ENCODE measurements at regions of chr7 and their contacts with region 1.

Region 1: DNA sequence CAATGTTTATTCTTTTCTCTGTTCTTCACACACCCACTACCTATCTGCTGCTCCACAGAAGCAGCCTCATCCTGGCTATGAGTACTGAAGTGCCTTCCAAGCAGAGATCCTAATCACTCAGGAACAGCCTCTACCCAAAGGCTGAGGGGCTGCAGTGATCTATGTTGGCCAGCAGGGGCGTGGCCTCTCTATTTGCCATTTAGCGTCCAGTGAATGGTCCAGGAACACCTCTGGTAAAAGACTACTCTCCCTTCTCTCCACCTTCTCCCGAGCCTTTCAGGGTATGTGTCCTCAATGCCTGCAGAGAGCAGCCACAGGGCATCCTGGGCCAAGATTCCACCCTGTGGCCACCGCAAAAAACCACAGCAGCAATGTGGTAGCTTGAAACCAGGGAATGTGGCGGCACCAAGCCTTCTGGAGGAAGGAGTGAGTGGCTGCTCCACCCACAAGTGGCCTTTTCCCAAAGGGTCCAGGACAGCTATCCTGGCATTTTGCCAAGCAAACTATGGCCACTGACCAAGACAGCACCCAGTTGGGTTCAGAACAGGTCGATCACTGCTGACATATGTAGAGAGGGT is 70.9 kb downstream of the SYPL1 start:
- DNase-seq: peak in 1 of 2 experiments; percentile 80
- H3K4me3 ChIP-seq: no peak overlapping the region
- H3K27ac ChIP-seq: no peak overlapping the region
- H3K4me1 ChIP-seq: peaks cover 0 to 7% (median 0%) of the 10 kb centered on the region in 4 experiments; a peak in 3 of 7 replicates
- H3K27me3 ChIP-seq: no peaks in the 10 kb centered on the region
- CTCF ChIP-seq: peak; percentile 76 to 98 (median 89)
- EP300 ChIP-seq: no peak
- POLR2A ChIP-seq: no peak
- RAD21 ChIP-seq: peak; percentile 55 to 65

Region 2: DNA sequence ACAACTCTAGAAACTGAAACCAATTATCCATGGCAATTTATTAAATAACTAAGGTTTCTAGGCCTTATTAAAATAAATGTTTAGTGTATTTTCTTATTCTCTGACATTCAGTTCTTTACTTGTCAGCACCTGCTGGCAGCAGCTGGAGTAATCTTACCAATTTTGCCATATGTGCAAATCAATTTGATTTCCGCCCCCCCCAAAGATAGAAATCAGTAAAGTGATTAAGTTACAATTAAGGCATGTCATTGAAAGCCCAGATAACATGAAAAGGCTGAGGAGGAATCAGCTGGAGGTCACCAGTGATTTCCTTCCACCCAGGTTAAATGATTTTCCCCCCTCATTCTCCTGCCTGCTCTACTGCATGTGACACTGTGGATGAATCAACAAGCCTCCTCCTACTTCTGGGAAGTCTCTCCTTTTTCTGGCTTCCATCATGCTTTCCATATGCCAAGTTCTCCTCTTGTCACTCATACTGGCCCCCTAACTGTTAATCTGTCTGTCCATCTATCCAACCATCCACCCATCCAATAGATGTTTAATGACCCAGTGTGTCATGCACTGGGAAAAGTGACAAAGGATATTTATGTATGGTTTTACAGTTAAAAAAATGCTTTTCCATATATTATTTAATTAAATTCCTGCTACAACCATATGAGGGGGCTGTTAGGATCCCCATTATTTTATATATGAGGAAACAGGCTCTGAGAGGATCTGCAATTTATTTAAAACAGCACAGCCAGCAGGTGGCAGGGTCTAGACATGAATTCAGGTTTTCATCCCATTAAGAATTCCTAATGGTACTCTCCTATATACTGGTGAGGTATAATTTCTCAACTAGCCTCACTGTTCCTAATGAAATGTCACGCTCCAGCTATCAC is 281.3 kb before region 1 on chr7:
- CTCF ChIA-PET with region 1: interaction called, 85 read pairs
- POLR2A ChIA-PET with region 1: no interaction called
- DNase-seq: no peak
- H3K4me3 ChIP-seq: no peak overlapping the region
- H3K27ac ChIP-seq: no peak overlapping the region
- H3K4me1 ChIP-seq: peaks cover 1 to 13% (median 4%) of the 10 kb centered on the region in 4 experiments; a peak in 4 of 7 replicates
- H3K27me3 ChIP-seq: no peaks in the 10 kb centered on the region
- CTCF ChIP-seq: peak in 2 of 3 experiments; percentile 45 to 47; a peak in 2 of 4 replicates
- EP300 ChIP-seq: no peak
- POLR2A ChIP-seq: no peak
- RAD21 ChIP-seq: peak; percentile 65 to 69

Region 3: DNA sequence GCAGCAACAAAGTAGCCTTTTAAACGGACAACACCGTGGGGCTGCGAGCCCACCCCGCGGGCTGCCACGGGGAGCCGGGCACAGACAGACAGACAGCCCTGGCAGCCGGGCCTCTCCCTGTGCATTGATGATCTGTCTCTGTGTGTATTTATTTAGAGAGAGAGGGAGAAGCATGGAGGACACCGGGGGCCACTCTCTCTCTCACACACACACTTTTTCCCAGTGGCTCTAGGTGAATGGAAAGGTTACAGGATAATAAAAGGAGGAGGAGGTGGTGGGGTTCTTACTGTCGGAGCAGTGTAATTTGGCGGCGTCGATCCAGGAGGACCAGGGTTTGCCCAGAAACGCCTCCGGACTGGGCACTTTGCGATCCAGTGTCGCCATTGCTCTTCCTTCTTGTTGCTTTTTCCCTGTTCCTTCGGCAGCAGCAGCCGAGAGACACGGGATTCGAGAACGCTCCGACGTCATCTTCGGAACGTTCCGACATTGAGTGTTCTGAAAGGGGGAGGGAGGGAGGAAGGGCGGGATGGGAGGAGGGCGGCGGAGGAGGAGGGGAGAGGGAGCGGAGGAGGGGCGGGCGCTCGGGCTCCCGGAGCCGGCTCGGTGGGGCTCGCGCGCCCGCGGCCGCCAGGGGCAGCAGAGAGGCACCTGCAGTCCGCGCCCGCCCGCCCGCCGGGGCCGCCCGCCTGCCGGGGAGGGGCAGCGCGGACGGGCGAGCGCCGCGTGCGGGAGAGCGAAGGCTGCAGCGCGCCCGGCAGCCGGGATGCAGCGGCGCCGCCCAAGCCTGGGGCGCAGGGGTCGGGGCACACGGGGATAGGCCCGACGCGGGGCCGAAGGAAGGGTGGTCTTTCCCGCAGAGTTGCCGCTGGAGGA is 164.9 kb before region 1 on chr7 and contains the start of gene ATXN7L1:
- CTCF ChIA-PET with region 1: interaction called, 32 read pairs
- POLR2A ChIA-PET with region 1: interaction called, 3 read pairs
- DNase-seq: peak; percentile 90 to 96
- H3K4me3 ChIP-seq: peak within 1 kb of the TSS; percentile 87 to 93 (median 90)
- H3K27ac ChIP-seq: peak within 1 kb of the TSS; percentile 91
- H3K4me1 ChIP-seq: peaks cover 6 to 27% (median 15%) of the 10 kb centered on the region in 4 experiments; a peak in 5 of 7 replicates
- H3K27me3 ChIP-seq: peaks cover 0 to 14% (median 12%) of the 10 kb centered on the region in 4 experiments; a peak in 5 of 7 replicates
- CTCF ChIP-seq: peak; percentile 50 to 57 (median 55); a peak in 3 of 4 replicates
- EP300 ChIP-seq: no peak
- POLR2A ChIP-seq: peak; percentile 79 to 89
- RAD21 ChIP-seq: peak; percentile 1 to 46; a peak in 2 of 4 replicates
- total RNA-seq, gene ATXN7L1: 34.0 and 34.5 TPM in 2 replicates

Region 4: GRCh38 chr7:105934572-105935185 is 106.5 kb before region 1 on chr7:
- CTCF ChIA-PET with region 1: interaction called, 119 read pairs
- POLR2A ChIA-PET with region 1: no interaction called
- DNase-seq: peak in 1 of 2 experiments; percentile 38
- H3K4me3 ChIP-seq: no peak overlapping the region
- H3K27ac ChIP-seq: no peak overlapping the region
- H3K4me1 ChIP-seq: peaks cover 0 to 4% (median under 1%) of the 10 kb centered on the region in 4 experiments; a peak in 2 of 7 replicates
- H3K27me3 ChIP-seq: no peaks in the 10 kb centered on the region
- CTCF ChIP-seq: peak; percentile 48 to 80 (median 78)
- EP300 ChIP-seq: no peak
- POLR2A ChIP-seq: no peak
- RAD21 ChIP-seq: peak; percentile 91 to 94

Region 5: DNA sequence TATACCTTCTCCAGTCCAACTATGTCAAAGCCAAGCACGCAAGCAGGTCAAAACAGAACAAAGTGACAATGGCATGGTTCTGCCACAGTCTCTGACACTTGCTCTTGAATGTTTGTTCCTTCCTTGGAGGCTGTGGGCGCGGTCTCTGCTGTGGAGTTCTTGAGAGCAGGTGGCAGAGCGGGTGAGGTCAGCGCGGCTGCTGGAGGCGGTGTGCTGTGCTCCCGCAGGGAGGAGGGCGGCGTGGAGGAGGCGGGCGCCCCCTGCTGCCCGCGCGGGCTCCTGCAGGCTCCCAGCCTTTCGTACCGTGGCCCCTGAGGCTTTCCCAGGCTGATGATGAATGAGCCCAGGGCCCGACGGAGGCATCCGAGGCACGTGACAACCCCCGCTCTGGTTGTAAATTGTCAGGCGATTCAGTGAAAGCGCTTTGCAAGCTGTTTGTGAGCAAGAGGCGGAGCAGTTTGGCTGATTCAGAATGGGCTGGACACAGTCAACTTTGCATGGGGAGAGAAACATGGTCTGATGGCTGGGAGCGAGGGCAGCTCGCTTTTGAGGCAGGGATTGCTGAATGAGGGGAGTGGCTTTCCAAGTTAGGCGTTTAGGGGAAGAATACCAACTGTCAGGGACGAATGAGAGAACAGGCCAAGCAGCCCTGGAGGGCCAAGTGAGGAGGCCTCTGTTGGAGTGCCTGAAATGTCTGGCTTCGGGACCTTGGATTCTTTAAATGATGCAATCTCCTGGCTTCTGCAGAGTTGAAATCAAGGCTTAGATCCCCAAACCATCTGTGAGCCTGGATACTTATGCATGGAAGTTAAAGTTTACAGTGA is 31.6 kb before region 1 on chr7:
- CTCF ChIA-PET with region 1: interaction called, 17 read pairs
- POLR2A ChIA-PET with region 1: no interaction called
- DNase-seq: peak; percentile 88 to 99
- H3K4me3 ChIP-seq: peak overlapping the region in 3 of 4 experiments; percentile 13 to 36 (median 26); a peak in 3 of 8 replicates
- H3K27ac ChIP-seq: 0 out of 2 replicates have a peak overlapping the region, but pooled peaks have one; percentile 16
- H3K4me1 ChIP-seq: peaks cover 3 to 12% (median 6%) of the 10 kb centered on the region in 4 experiments; a peak in 6 of 7 replicates
- H3K27me3 ChIP-seq: peaks cover 0 to 3% (median 2%) of the 10 kb centered on the region in 4 experiments; a peak in 3 of 7 replicates
- CTCF ChIP-seq: peak; percentile 93 to 97 (median 94)
- EP300 ChIP-seq: peak in 1 of 2 experiments; percentile 82; a peak in 1 of 3 replicates
- POLR2A ChIP-seq: no peak
- RAD21 ChIP-seq: peak; percentile 92 to 95

Region 6: DNA sequence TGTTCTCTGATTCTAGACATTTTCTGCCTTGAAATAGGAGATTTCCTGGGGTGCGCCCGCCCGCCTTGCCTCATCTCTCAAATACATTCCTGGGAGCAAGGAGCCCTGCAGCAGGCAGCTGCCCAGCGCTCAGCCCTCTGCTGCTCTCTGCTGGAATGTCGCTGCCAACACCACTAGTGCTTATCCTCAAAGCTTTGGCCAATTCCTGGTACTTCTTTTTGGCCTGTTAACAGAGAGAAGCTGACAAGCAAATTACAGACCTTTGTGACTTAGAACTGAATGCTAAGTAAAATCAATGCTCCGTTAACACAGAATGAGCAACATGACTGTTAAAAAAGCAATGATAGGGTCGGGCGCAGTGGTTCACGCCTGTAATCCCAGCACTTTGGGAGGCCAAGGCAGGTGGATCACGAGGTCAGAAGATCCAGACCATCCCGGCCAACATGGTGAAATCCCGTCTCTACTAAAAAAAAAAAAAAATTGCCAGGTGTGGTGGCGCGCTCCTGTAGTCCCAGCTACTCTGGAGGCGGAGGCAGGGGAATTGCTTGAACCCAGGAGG is 112.7 kb after region 1 on chr7:
- CTCF ChIA-PET with region 1: interaction called, 23 read pairs
- POLR2A ChIA-PET with region 1: no interaction called
- DNase-seq: peak; percentile 63 to 89
- H3K4me3 ChIP-seq: no peak overlapping the region
- H3K27ac ChIP-seq: no peak overlapping the region
- H3K4me1 ChIP-seq: no peaks in the 10 kb centered on the region; a peak in 1 of 7 replicates
- H3K27me3 ChIP-seq: no peaks in the 10 kb centered on the region
- CTCF ChIP-seq: peak; percentile 91 to 96 (median 95)
- EP300 ChIP-seq: no peak
- POLR2A ChIP-seq: no peak
- RAD21 ChIP-seq: peak; percentile 99

Measured in H1 (cell line).